ENCODE measurements at regions of chr15 and their contacts with region 1.

Region 1: GRCh38 chr15:63396152-63396928 is 14.7 kb upstream of the CA12 start:
- DNase-seq: no peak
- H3K4me3 ChIP-seq: no peak overlapping the region
- CTCF ChIP-seq: no peak
- POLR2A ChIP-seq: no peak

Region 2: DNA sequence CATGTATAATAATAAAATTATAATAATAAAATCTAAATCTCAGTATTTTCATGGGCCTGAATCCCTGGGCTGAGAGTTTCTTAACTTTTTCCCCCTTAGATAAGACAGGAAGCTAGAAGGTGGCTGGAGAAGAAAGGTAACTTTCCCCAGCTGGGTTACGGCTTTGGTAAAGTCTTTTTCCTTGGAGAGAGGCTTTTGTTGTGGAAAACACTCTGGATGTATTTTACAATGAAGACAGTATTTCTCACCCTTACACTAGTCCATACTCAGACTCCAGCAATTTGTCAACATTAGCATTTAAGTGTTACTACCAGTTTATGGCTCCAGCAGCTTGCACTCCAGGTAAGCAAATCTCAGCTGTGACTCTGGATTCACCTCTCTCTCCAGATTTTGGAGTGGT is 84.1 kb before region 1 on chr15:
- intact Hi-C with region 1: loop called (anchors 5 kb)
- DNase-seq: no peak
- H3K4me3 ChIP-seq: no peak overlapping the region
- CTCF ChIP-seq: no peak
- POLR2A ChIP-seq: no peak